ENCODE measurements at regions of chr2 and their contacts with region 1.

Region 1: DNA sequence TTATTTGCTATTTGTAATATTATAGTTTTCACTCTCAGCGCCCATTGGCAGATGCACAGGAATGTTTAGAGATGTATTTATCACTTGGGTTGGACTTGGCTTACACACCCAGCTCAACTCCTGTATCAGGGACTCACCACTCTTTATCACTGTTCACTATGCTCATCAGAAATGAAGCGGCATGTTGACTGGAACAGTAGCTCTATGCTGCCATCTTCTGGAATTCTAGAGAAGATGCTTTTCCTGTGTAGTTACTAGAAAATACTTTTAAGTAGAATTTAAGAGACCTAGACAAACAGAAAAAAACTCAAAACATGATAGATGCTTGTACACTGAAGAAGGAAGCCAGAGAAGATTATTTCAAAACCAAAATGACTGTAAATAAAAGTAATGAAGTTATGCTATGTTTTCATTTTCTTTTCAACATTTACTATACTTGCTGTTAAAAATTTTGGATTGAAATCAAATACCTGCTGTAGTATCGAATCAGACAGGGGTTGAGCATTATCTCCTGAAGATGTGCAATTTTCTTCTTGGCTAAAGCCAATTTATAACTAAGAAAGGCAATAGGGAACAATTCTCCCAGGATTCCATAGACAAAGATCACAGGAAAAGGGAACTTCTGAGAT is 47.4 kb upstream of the NXPH2 start:
- DNase-seq: peak; percentile 82
- H3K4me3 ChIP-seq: no peak overlapping the region
- H3K27ac ChIP-seq: no peak overlapping the region
- H3K4me1 ChIP-seq: no peaks in the 10 kb centered on the region
- H3K27me3 ChIP-seq: no peaks in the 10 kb centered on the region
- CTCF ChIP-seq: peak; percentile 82

Region 2: GRCh38 chr2:137511526-137511925 is 1316.0 kb before region 1 on chr2:
- CTCF ChIA-PET with region 1: no interaction called
- POLR2A ChIA-PET with region 1: no interaction called
- intact Hi-C with region 1: loop called (anchors 5 kb)
- DNase-seq: no peak
- H3K4me3 ChIP-seq: no peak overlapping the region
- H3K27ac ChIP-seq: no peak overlapping the region
- H3K4me1 ChIP-seq: no peaks in the 10 kb centered on the region
- H3K27me3 ChIP-seq: no peaks in the 10 kb centered on the region
- CTCF ChIP-seq: no peak

Region 3: GRCh38 chr2:137865954-137866540 is 961.5 kb before region 1 on chr2:
- CTCF ChIA-PET with region 1: interaction called, 7 read pairs
- POLR2A ChIA-PET with region 1: no interaction called
- intact Hi-C with region 1: loop called (anchors 1 kb)
- DNase-seq: peak; percentile 66
- H3K4me3 ChIP-seq: no peak overlapping the region
- H3K27ac ChIP-seq: no peak overlapping the region
- H3K4me1 ChIP-seq: no peaks in the 10 kb centered on the region
- H3K27me3 ChIP-seq: no peaks in the 10 kb centered on the region
- CTCF ChIP-seq: peak; percentile 69

Region 4: GRCh38 chr2:137910641-137911040 is 916.9 kb before region 1 on chr2:
- CTCF ChIA-PET with region 1: interaction called, 15 read pairs
- POLR2A ChIA-PET with region 1: no interaction called
- intact Hi-C with region 1: loop called (anchors 2 kb)
- DNase-seq: peak; percentile 22
- H3K4me3 ChIP-seq: no peak overlapping the region
- H3K27ac ChIP-seq: no peak overlapping the region
- H3K4me1 ChIP-seq: no peaks in the 10 kb centered on the region
- H3K27me3 ChIP-seq: no peaks in the 10 kb centered on the region
- CTCF ChIP-seq: peak; percentile 64

Region 5: GRCh38 chr2:138373993-138374408 is 453.5 kb before region 1 on chr2:
- CTCF ChIA-PET with region 1: no interaction called
- POLR2A ChIA-PET with region 1: no interaction called
- intact Hi-C with region 1: loop called (anchors 2 kb)
- DNase-seq: peak; percentile 47
- H3K4me3 ChIP-seq: no peak overlapping the region
- H3K27ac ChIP-seq: no peak overlapping the region
- H3K4me1 ChIP-seq: no peaks in the 10 kb centered on the region
- H3K27me3 ChIP-seq: no peaks in the 10 kb centered on the region
- CTCF ChIP-seq: peak; percentile 84

Region 6: DNA sequence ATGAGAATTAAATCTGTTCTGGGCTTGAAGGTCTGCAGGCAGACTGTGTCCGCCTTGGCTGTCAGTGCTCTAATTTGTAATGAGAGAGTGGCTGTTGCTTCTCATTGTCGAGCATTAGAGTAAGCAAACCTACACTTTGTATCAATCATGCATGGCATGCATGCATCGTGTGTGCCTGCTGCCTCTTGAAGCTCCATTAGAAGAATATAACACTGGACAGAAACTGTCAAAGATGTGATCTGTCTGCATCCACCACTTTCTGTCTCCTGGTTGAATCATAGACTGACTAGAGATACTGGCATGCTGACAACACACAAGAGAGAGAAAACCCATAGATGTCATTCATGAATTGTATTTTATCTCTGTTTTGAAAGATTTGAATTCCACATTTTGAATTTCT is 227.7 kb after region 1 on chr2:
- CTCF ChIA-PET with region 1: no interaction called
- POLR2A ChIA-PET with region 1: no interaction called
- intact Hi-C with region 1: no loop called
- DNase-seq: no peak
- H3K4me3 ChIP-seq: no peak overlapping the region
- H3K27ac ChIP-seq: no peak overlapping the region
- H3K4me1 ChIP-seq: no peaks in the 10 kb centered on the region
- H3K27me3 ChIP-seq: no peaks in the 10 kb centered on the region
- CTCF ChIP-seq: no peak